Lower leg skin (tissue), 4 donors: ENCODE measurements at regions of chr17 and their contacts with region 1.

Region 1: DNA sequence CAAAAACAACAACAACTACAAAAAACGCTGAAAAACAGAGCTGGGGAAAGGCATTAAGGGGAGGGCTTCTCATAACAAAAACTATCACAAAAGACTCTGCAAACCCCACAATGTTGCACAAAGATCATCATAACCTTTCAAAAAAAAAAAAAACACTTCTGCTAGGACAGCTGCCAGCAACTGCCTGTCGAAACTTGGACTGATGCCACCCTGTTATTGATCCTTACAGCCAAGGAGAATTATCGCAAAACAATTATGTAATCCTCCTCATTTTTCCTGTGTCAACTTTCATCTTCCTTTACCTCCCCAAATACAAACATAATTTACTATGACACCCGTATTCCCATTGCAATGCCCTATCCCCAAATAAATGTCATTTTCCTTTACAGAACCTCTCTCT is 9.3 kb downstream of the CCDC40 start:
- DNase-seq: no peak
- H3K4me3 ChIP-seq: no peak overlapping the region
- CTCF ChIP-seq: no peak
- POLR2A ChIP-seq: no peak

Region 2: DNA sequence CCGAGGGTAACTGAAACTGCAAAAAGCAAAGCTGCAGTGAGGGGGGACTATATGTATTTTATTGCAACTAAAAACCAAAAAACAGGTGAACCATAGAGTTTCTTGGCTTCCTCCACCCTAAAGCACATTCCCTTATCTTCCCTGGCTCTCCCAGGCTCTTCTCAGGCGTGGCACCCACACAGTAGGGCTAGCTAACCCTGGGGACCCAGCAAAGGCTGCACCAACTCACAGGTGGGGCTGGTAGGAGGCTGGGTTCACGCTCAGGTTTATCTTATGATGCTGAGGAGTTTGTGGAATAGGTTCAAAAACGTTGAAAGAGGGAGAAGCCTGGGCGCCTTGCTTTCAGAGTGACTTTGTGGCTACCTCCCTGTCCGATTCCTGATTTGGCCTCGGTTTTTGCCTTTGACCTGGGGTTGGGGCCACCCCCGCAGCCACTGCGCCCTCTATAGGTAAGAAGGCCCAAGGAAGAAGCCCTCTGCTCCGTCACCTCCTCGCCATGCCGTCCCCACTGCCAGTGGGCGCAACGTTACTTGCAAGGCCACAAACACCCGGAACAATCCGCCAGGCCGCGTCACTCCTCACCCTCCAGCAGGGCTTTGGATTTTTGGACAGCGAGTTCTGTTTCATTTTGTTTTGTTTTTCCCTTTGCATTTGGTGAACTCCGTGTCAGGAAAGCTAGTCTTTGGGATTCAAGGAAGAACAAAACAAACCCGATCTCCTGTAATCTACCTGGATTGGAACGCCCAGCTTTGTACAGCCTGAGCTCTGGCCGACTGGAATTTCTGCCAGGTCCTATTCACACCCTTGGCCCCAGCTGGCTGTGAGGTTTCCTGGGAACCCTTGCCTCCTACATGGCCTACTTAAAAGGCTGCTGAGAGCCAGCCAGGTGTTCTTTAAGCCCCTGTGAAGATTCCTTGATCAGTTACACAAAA is 70.9 kb before region 1 on chr17:
- intact Hi-C with region 1: no loop called
- DNase-seq: peak in 1 of 2 donors; percentile 81
- H3K4me3 ChIP-seq: no peak overlapping the region
- CTCF ChIP-seq: no peak
- POLR2A ChIP-seq: no peak

Region 3: DNA sequence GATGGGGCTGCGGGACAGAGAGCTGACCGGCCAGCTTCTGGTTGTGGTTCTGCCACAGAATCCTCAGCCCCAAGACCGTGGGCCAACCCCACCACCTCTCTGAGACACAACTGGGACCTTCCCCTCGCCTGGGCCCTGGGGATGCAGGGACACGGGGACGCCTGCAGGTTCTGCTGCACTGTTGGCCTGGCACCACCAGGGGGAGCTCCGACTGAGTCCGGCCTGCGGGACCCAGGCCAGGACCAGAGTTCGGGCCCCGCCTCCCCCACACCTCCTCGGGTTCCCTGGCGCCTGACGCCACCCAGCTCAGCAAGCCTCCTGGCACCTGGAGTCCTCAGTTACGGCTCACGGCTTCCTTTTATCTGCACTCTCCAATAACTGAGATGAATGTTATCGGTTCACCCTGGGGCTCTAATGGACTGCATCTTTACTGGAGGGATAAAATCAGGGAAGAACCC is 37.3 kb before region 1 on chr17:
- intact Hi-C with region 1: loop called (anchors 5 kb)
- DNase-seq: peak; percentile 73 to 95
- H3K4me3 ChIP-seq: no peak overlapping the region
- CTCF ChIP-seq: peak in 1 of 3 donors; percentile 90
- POLR2A ChIP-seq: no peak

Region 4: DNA sequence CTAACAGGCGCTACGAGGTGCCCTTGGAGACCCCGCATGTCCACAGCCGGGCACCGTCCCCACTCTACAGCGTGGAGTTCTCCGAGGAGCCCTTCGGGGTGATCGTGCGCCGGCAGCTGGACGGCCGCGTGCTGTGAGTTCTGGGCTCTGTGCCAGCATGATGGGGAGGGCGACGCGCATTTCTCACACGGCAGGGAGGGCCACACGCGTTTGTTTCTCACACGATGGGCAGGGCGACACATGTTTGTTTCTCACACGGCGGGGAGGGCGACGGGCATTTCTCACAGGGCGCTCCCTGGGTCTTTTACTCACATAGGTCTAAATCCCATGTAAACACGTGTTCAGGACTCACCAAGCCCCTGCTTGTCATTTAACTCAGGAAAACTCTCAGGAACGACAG is 60.1 kb after region 1 on chr17:
- intact Hi-C with region 1: no loop called
- DNase-seq: peak in 1 of 2 donors; percentile 91
- H3K4me3 ChIP-seq: no peak overlapping the region
- CTCF ChIP-seq: no peak
- POLR2A ChIP-seq: no peak